Posterior cingulate gyrus (tissue), 11 donors: ENCODE measurements at regions of chr12 and their contacts with region 1.

Region 1: GRCh38 chr12:4276524-4277204 is 3.1 kb downstream of the CCND2 start:
- DNase-seq: peak in 9 of 10 donors; percentile 64 to 96 (median 84)

Region 2: DNA sequence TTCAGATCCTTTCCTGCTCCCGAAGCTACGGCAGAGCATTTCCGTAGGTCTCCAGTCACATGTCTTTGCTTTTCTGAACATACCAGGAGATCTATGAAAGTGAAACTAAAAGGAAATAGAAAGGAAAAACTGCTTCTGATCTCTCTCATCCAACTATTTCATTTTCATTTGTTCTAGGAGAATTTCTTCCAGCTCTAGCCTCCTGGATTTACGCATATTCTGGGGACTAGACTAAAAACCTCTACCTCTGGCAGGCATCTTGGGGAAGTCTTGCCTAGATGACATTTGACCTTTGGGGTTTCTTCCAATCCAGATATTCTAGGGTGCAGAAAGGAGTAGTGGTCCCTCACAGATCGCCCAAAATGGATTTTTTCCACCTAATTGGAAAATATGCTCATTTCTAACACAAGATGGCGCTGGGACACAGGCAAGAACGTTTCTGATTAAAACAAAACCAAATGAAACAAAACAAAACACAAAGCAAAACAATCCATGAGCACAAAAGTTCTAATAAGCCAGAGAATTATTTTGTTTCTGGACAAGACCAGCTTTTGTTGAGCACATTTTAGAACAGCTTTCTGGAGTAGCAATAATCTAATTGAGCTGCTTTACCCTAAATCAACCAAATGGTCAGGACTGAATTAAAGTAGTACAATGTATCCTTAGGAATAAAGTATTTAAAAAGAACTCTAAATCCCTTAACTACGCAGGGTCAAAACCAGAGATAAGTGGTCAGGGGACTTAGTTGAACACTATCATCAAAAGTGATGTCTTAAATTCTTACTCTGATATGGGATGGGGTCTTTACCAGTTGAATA is 391.2 kb before region 1 on chr12:
- intact Hi-C with region 1: loop called (anchors 1 kb)
- DNase-seq: peak in 1 of 10 donors; percentile 20

Region 3: DNA sequence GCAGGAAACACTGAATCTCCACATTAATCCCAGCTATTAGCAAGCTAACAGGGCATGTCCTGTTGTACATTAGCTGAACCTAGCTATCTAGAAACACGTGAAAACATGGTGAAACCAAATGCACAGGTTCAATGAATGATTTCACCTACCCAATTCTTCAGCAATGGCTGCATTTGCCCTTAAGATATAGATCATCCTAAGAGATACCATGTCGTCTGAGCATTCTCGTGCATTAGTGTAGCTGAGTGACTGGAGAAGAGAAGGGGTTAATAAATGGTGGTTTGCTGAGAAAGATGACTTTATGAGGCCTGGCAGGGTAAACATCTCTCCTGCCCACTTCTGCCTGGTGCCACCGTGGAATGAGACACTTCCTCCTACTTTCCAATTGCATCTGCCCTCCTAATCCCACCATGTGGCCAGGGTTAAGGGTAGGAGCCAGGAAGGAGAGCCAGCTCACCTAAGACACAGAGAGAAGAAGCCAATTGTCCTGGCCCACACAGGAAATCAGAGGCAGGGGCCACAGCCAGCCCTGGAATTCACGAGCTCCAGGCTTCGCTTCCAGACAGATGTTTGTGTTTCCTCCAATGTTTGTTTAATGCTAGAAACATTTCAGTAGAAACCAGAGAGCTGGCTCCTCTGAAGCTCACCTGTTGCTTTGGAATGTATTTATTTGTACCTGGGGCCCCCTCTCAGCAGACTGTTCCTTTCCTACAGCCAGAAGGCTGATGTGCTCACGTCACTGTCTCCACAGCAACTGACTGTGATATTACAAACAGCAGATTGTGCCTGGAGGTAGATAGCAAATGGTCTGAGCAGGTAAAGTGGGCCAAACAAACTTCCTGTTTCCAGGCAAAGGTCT is 277.5 kb before region 1 on chr12:
- intact Hi-C with region 1: loop called (anchors 2 kb)
- DNase-seq: no peak

Region 4: GRCh38 chr12:4030929-4031702 is 245.5 kb before region 1 on chr12:
- intact Hi-C with region 1: loop called (anchors 5 kb)
- DNase-seq: peak; percentile 50 to 97 (median 73)

Region 5: DNA sequence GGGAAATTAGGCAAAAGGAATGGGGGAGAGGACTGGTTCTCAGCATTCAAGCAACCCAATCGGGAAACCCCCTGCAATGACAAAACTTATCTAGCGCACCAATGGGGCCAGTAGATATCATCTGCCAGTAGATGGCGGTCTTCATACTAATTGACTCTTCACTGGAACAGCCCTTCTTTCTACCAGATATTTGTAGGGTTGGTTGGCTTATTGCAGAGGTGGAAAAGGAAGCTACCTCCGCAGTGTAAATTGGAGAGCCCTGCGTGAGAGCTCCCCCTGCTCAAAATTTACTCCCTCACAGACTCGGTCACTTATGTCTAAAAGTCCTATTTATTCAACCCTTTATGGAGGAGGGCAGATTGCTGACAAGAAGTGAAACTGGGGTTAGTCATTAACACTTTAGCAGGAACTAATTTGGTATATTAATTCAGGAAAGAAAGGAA is 169.2 kb before region 1 on chr12:
- intact Hi-C with region 1: loop called (anchors 5 kb)
- DNase-seq: no peak

Region 6: GRCh38 chr12:4366090-4366489 is 89.4 kb after region 1 on chr12:
- intact Hi-C with region 1: no loop called
- DNase-seq: no peak